Astrocyte of the cerebellum (primary cell): ENCODE measurements at regions of chr18 and their contacts with region 1.

Region 1: DNA sequence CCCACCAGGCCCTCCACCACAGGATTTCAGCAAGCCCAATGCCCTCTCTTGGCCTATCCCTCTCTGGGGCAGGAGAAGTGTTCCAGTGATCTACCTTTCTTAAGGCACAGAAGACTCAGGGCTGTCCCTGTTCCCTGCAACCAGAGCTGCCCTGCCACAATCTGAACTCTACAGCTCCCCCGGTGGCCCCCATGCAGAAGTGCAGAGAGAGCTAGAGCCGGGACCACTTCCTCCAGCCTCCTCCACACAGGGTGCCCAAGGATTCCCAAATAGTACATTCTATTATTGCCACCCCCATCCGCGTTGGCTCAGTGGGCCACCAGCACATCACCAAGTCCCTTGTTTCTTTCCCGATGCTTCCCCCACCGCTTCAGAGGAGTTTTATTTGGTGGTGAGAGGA is 114.8 kb upstream of the PTPRM start:
- DNase-seq: no peak
- H3K4me3 ChIP-seq: no peak overlapping the region
- CTCF ChIP-seq: peak; percentile 54

Region 2: GRCh38 chr18:7338846-7339245 is 113.5 kb before region 1 on chr18:
- in situ Hi-C with region 1: no loop called
- DNase-seq: no peak
- H3K4me3 ChIP-seq: no peak overlapping the region
- CTCF ChIP-seq: no peak

Region 3: DNA sequence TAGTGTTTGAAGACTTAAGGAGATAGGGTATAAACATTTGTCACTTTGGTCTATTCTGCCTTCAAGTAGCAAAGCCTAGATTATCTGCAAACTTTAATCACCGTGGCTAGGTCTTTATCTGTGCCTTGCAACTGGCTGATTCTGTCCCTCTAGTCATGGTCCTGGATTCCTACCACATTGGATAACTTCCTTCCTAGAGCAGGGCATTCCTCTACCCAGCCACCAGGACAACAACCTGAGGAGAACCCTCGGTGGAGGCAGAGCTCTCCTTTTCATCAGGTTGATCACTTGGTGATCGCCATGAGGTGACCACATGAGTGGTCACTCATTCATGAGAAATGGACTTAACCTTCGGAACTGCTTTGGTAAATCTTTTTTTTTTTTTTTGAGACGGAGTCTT is 89.5 kb after region 1 on chr18:
- in situ Hi-C with region 1: loop called (anchors 5 kb)
- DNase-seq: no peak
- H3K4me3 ChIP-seq: no peak overlapping the region
- CTCF ChIP-seq: no peak